ENCODE measurements at regions of chr5 and their contacts with region 1.

Region 1: GRCh38 chr5:150700594-150701293 is at the start of gene RBM22:
- DNase-seq: peak; percentile 89
- H3K4me3 Mint-ChIP-seq: no peak within 1 kb of the TSS
- H3K27ac Mint-ChIP-seq: no peak within 1 kb of the TSS
- H3K4me1 Mint-ChIP-seq: peaks cover 5% of the 10 kb centered on the region
- H3K27me3 Mint-ChIP-seq: no peaks in the 10 kb centered on the region
- total RNA-seq, gene RBM22: 77.5 and 81.9 TPM in 2 replicates

Region 2: GRCh38 chr5:149960272-149961185 is 740.2 kb before region 1 on chr5 and contains the start of gene SLC26A2:
- intact Hi-C with region 1: loop called (anchors 2 kb)
- DNase-seq: peak; percentile 94
- H3K4me3 Mint-ChIP-seq: peak within 1 kb of the TSS; percentile 95
- H3K27ac Mint-ChIP-seq: peak within 1 kb of the TSS; percentile 100
- H3K4me1 Mint-ChIP-seq: peaks cover 37% of the 10 kb centered on the region
- H3K27me3 Mint-ChIP-seq: no peaks in the 10 kb centered on the region
- total RNA-seq, gene SLC26A2: 9.3 and 9.5 TPM in 2 replicates

Region 3: DNA sequence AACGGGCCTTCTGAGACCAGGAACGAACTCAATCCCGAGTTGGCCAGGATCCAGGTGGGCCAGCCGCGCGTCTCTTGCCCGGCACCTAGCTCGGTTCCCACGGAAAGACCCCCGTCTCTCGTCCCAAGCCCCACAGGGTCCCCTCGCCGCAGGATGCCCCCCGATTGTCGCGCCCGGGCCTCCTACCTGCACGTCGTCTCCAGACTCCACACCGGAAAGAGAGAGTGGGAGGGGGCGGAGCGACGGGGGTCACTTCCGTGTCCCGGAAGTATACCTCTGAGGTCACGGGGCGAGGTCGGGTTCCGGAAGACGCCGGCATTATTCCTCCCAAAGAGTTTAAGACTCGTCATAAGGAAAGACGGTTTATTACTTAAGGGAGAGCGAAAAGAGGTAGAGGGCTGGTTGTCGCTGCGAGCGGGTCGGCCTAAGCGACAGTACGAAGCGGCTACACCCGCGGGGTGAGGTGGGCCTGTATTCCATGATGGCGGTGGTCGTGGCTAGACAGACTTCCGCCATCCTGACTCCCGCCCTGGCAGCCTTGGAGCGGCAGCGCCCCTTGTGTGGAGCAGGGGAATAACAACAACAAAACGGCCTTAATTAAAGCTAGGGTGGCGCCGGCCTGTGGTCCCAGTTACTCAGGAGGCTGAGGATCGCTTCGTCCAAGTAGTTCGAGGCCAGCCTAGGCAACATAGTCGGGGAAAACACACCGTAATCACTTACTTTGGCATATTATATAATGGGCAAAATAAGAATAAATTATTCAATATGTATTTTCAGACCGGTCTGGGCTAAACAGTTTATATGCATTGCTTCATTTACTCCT is 251.0 kb before region 1 on chr5 and contains the start of gene RPS14:
- intact Hi-C with region 1: loop called (anchors 1 kb)
- DNase-seq: peak; percentile 91
- H3K4me3 Mint-ChIP-seq: peak within 1 kb of the TSS; percentile 92
- H3K27ac Mint-ChIP-seq: peak within 1 kb of the TSS; percentile 100
- H3K4me1 Mint-ChIP-seq: peaks cover 40% of the 10 kb centered on the region
- H3K27me3 Mint-ChIP-seq: peaks cover 2% of the 10 kb centered on the region
- total RNA-seq, gene RPS14: 2,328 and 2,429 TPM in 2 replicates

Region 4: DNA sequence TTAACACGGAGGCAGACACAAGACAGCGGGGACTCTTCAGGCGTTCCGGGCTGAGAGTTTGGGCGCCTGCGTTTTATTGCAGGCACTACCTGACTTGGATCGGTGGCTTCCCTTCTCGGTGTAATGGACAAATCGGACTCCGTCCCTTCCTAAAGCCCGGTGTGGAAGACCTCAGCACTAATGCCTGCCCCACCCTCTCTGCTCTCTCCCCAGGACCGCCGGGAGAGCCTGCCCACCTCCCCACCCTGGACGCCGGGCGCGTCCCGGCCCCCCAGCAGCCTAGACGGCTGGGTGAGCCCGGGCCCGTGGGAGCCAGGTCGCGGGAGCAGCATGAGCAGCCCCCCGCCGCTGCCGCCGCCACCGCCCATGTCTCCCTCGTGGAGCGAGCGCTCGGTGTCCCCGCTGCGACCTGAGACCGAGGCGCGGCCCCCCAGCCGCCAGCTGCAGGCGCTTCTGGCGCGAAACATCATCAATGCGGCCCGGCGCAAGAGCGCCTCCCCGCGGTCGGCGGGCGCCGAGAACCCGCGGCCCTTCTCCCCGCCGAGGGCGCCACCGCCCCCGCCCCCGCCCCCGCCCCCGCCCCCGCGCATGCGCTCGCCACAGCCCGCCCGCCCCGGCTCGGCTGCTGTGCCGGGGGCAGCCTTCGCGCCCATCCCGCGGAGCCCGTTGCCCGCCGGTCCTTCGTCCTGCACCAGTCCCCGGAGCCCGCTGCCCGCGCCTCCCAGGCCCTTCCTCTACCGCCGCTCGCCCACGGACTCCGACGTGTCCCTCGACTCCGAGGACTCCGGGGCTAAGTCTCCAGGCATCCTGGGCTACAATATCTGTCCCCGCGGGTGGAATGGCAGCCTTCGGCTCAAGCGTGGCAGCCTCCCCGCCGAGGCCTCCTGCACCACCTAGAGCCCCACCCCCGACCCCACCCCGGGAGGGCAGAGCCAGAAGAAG is 44.3 kb before region 1 on chr5:
- intact Hi-C with region 1: loop called (anchors 2 kb)
- DNase-seq: peak; percentile 74
- H3K4me3 Mint-ChIP-seq: peak overlapping the region; percentile 64
- H3K27ac Mint-ChIP-seq: no peak overlapping the region
- H3K4me1 Mint-ChIP-seq: peaks cover 7% of the 10 kb centered on the region
- H3K27me3 Mint-ChIP-seq: peaks cover 21% of the 10 kb centered on the region

Region 5: DNA sequence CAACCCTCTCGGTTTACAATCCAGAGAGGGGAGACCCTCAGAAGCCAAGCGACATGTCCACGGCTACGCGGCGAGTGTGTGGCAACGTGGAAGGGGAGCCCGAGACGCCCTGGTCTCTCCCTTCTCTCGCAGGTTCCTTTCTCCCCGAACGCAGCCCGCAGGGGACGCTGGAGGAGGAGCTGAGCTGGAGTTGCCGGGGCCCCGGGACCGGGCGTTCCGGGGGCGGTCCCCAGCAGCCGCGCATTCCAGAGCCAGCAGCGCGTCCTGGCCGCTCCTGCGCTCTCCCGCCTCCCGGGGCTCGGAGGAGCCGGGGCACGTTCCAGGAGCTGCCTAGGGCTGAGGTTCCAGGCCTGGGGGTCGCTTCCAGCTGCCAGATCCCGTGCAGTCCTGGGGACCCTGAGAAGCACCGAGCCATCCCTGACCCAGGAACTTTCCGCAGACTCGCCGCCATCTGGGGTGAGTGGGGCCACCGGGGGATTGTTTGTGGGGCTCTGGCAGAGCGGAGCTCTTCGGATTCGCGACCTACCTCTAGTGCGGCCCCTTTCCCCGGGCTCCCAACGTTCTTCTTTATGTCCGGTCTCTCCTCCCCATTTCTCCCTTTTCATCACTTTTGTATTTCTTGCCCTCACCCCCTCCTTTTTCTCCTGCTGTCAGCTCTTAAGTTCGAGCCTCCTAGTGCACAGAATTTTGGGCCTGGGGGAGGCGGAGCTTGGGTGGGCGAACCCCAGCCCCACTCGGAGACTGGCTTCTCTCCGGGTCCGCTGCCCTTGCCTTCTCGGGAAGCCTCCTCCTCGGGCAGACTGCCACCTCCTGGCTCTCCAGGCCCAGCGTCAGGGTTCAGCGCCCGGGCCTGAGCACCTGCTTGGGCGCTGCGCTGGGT is 78.0 kb after region 1 on chr5 and contains the start of gene SMIM3:
- intact Hi-C with region 1: loop called (anchors 1 kb)
- DNase-seq: peak; percentile 53
- H3K4me3 Mint-ChIP-seq: peak within 1 kb of the TSS; percentile 100
- H3K27ac Mint-ChIP-seq: peak within 1 kb of the TSS; percentile 83
- H3K4me1 Mint-ChIP-seq: peaks cover 62% of the 10 kb centered on the region
- H3K27me3 Mint-ChIP-seq: peaks cover 2% of the 10 kb centered on the region
- total RNA-seq, gene SMIM3: 12.8 and 13.4 TPM in 2 replicates

Region 6: DNA sequence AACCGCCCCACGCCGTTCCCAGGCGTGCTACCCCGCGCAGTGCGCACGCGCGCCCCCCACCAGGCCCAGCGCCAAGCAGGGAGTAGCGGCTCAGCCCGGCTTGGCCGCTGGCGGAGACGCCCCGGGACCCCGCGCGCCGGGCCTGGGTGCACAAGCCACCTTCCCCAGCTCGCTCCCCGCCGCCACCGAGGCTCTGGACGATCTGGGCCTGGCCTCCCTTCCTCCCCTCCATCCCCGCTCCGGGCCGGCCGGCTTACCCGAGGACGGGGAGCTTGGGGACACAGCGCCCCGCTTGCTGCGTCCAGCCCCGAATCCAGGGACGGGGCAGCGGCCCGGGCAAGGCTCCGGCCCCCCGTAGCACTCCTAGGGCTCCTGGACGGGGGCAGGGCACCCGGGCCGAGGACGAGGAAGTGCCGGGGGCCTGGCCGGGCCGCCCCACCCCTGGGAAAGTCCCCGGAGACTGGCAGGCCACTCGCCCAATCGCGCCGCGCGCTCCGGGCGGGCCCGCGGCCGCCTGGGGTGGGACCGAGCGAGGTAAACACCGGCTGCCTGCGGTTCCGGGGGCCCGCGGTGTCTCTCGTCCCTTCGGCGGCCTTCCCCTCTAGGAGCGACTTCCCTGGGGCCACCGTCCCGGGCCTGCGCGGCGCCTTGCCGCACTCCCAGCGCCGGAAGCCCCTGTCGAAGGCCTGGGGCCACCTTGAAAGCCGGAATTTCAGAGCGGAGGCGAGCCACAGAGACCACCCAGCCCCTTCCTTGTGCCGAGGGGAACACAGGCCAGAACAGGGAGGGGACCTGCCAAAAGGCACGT is 380.1 kb after region 1 on chr5 and contains the start of gene TNIP1:
- intact Hi-C with region 1: loop called (anchors 2 kb)
- DNase-seq: peak; percentile 95
- H3K4me3 Mint-ChIP-seq: peak within 1 kb of the TSS; percentile 91
- H3K27ac Mint-ChIP-seq: peak within 1 kb of the TSS; percentile 93
- H3K4me1 Mint-ChIP-seq: peaks cover 85% of the 10 kb centered on the region
- H3K27me3 Mint-ChIP-seq: no peaks in the 10 kb centered on the region
- total RNA-seq, gene TNIP1: 287 and 304 TPM in 2 replicates

Region 7: DNA sequence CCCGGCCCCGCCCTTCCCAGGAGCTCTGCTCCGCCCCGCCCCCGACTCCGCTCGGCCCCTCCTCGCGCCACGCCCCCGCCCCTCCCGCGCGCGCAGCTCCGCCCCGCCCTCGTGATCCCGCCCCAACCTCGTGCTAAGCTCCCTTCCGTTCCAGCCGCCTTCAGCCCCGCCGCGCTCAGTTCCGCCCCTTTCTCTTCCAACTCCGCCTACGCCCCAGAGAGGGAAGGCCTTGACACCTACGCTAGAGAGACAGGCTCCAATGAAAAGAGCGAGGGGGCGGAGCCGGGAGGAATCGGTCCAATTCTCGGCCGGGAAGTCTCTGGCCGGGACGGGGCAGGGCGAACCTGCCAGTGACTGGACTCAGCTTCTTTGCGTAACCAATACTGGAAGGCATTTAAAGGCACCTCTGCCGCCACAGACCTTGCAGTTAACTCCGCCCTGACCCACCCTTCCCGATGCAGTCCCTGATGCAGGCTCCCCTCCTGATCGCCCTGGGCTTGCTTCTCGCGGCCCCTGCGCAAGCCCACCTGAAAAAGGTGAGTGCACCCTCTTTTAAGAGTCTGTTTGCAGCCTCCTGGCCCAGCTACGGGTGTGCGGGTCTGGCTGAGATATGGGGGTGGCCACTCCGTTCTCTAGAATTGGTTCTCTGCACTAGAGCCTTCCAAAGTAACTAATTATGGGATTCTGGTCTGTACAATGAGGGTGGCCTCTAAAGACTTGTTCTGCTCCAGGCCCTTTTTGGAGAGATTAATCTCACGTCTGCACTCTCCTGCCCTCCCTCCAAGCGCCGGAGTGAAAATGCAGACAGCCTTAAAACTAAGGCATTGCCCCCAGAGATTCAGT is 552.2 kb after region 1 on chr5 and contains the start of gene GM2A:
- intact Hi-C with region 1: loop called (anchors 2 kb)
- DNase-seq: peak; percentile 99
- H3K4me3 Mint-ChIP-seq: peak within 1 kb of the TSS; percentile 87
- H3K27ac Mint-ChIP-seq: peak within 1 kb of the TSS; percentile 88
- H3K4me1 Mint-ChIP-seq: peaks cover 44% of the 10 kb centered on the region
- H3K27me3 Mint-ChIP-seq: peaks cover 2% of the 10 kb centered on the region
- total RNA-seq, gene GM2A: 16.9 and 21.1 TPM in 2 replicates

Measured in activated T-helper 1 cell treated with anti-CD3 and anti-CD28 coated beads, Interleukin-12 subunit alpha, Interleukin-12 subunit beta, Interleukin-2, Interleukin-4 antibody, amounts not matched to agents 30 ng/mL and 10 ng/mL and 1 ng/mL, durations not matched to agents 14 hours and 24 hours and 36 hours (primary cell).